HepG2 (cell line): ENCODE measurements at regions of chr2 and their contacts with region 1.

Region 1: GRCh38 chr2:231706731-231707624 is 1.3 kb upstream of the PTMA start:
- DNase-seq: peak; percentile 95
- ATAC-seq: peak; percentile 35
- H3K4me3 ChIP-seq: peak overlapping the region; percentile 58 to 83 (median 75)
- H3K27ac ChIP-seq: peak overlapping the region; percentile 87
- H3K4me1 ChIP-seq: peaks cover 55% of the 10 kb centered on the region
- H3K27me3 ChIP-seq: no peaks in the 10 kb centered on the region
- CTCF ChIP-seq: peak; percentile 98
- EP300 ChIP-seq: peak in 1 of 2 experiments; percentile 16; a peak in 1 of 4 replicates
- POLR2A ChIP-seq: peak in 1 of 2 experiments; percentile 79; a peak in 2 of 4 replicates
- RAD21 ChIP-seq: no peak

Region 2: GRCh38 chr2:231612179-231613053 is 94.6 kb before region 1 on chr2:
- CTCF ChIA-PET with region 1: no interaction called
- POLR2A ChIA-PET with region 1: interaction called, 4 read pairs
- in situ Hi-C with region 1: loop called (anchors 5 kb)
- intact Hi-C with region 1: no loop called
- DNase-seq: peak; percentile 80
- ATAC-seq: peak; percentile 72
- H3K4me3 ChIP-seq: peak overlapping the region in 1 of 3 experiments; percentile 45; a peak in 2 of 6 replicates
- H3K27ac ChIP-seq: peak overlapping the region; percentile 28
- H3K4me1 ChIP-seq: peaks cover 62% of the 10 kb centered on the region
- H3K27me3 ChIP-seq: peaks cover 3 to 8% of the 10 kb centered on the region in 2 experiments; a peak in 2 of 5 replicates
- CTCF ChIP-seq: peak; percentile 96
- EP300 ChIP-seq: no peak
- POLR2A ChIP-seq: no peak
- RAD21 ChIP-seq: peak; percentile 91

Region 3: GRCh38 chr2:231674587-231675338 is 32.2 kb before region 1 on chr2:
- CTCF ChIA-PET with region 1: interaction called, 7 read pairs
- POLR2A ChIA-PET with region 1: interaction called, 56 read pairs
- in situ Hi-C with region 1: loop called (anchors 5 kb)
- intact Hi-C with region 1: no loop called
- DNase-seq: peak; percentile 69
- ATAC-seq: peak; percentile 63
- H3K4me3 ChIP-seq: peak overlapping the region in 1 of 3 experiments; percentile 51; a peak in 2 of 6 replicates
- H3K27ac ChIP-seq: no peak overlapping the region
- H3K4me1 ChIP-seq: peaks cover 70% of the 10 kb centered on the region
- H3K27me3 ChIP-seq: peaks cover 0 to 7% of the 10 kb centered on the region in 2 experiments; a peak in 1 of 5 replicates
- CTCF ChIP-seq: peak; percentile 98
- EP300 ChIP-seq: no peak
- POLR2A ChIP-seq: no peak
- RAD21 ChIP-seq: peak; percentile 69

Region 4: GRCh38 chr2:231687133-231687852 is 19.7 kb before region 1 on chr2:
- CTCF ChIA-PET with region 1: interaction called, 8 read pairs
- POLR2A ChIA-PET with region 1: interaction called, 56 read pairs
- in situ Hi-C with region 1: no loop called
- intact Hi-C with region 1: no loop called
- DNase-seq: peak; percentile 81
- ATAC-seq: peak; percentile 85
- H3K4me3 ChIP-seq: peak overlapping the region in 2 of 3 experiments; percentile 18 to 55; a peak in 2 of 6 replicates
- H3K27ac ChIP-seq: no peak overlapping the region
- H3K4me1 ChIP-seq: peaks cover 53% of the 10 kb centered on the region
- H3K27me3 ChIP-seq: peaks cover 4 to 25% of the 10 kb centered on the region in 2 experiments; a peak in 3 of 5 replicates
- CTCF ChIP-seq: peak; percentile 99
- EP300 ChIP-seq: no peak
- POLR2A ChIP-seq: peak in 1 of 2 experiments; percentile 60; a peak in 2 of 4 replicates
- RAD21 ChIP-seq: peak; percentile 91

Region 5: GRCh38 chr2:231752061-231752460 is 45.1 kb after region 1 on chr2:
- CTCF ChIA-PET with region 1: no interaction called
- POLR2A ChIA-PET with region 1: no interaction called
- in situ Hi-C with region 1: no loop called
- intact Hi-C with region 1: no loop called
- DNase-seq: no peak
- ATAC-seq: no peak
- H3K4me3 ChIP-seq: no peak overlapping the region
- H3K27ac ChIP-seq: no peak overlapping the region
- H3K4me1 ChIP-seq: peaks cover 11% of the 10 kb centered on the region
- H3K27me3 ChIP-seq: peaks cover 0 to 3% of the 10 kb centered on the region in 2 experiments; a peak in 1 of 5 replicates
- CTCF ChIP-seq: no peak
- EP300 ChIP-seq: no peak
- POLR2A ChIP-seq: no peak
- RAD21 ChIP-seq: no peak